Right cardiac atrium (tissue), 5 donors: ENCODE measurements at regions of chr20 and their contacts with region 1.

Region 1: DNA sequence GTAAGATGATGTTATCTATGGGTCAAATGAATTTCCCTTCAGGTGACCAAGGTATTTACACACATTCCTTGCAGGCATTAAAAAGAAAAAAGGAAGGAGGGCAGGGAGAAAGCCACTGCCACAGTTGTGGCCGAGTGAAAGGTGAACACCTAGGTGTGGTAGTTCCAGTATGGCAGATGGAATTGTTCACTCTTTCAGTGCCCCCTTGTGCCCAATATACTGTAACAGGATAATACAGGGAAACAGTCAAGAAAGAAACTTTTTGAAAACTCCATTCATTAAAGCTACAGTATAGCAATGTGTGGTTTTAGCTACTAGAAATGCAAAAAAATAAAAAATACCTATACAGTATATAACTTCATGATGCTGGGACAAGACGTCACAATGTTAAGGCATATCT is 52.1 kb downstream of the BMP2 start:
- DNase-seq: no peak
- ATAC-seq: peak; percentile 40 to 64
- H3K4me3 ChIP-seq: no peak overlapping the region
- H3K27ac ChIP-seq: no peak overlapping the region
- H3K4me1 ChIP-seq: no peaks in the 10 kb centered on the region
- H3K27me3 ChIP-seq: no peaks in the 10 kb centered on the region

Region 2: GRCh38 chr20:6583134-6583738 is 236.4 kb before region 1 on chr20:
- intact Hi-C with region 1: loop called in 2 of 4 experiments (anchors 5 to 10 kb)
- DNase-seq: peak; percentile 52 to 82 (median 63)
- ATAC-seq: peak; percentile 81 to 85
- H3K4me3 ChIP-seq: no peak overlapping the region
- H3K27ac ChIP-seq: no peak overlapping the region
- H3K4me1 ChIP-seq: peaks cover 3% of the 10 kb centered on the region
- H3K27me3 ChIP-seq: no peaks in the 10 kb centered on the region

Region 3: GRCh38 chr20:6914986-6915385 is 95.4 kb after region 1 on chr20:
- intact Hi-C with region 1: no loop called
- DNase-seq: no peak
- ATAC-seq: no peak
- H3K4me3 ChIP-seq: no peak overlapping the region
- H3K27ac ChIP-seq: no peak overlapping the region
- H3K4me1 ChIP-seq: no peaks in the 10 kb centered on the region
- H3K27me3 ChIP-seq: no peaks in the 10 kb centered on the region

Region 4: GRCh38 chr20:7161690-7162089 is 342.1 kb after region 1 on chr20:
- intact Hi-C with region 1: no loop called
- DNase-seq: peak in 1 of 3 donors; percentile 40
- ATAC-seq: no peak
- H3K4me3 ChIP-seq: no peak overlapping the region
- H3K27ac ChIP-seq: no peak overlapping the region
- H3K4me1 ChIP-seq: no peaks in the 10 kb centered on the region
- H3K27me3 ChIP-seq: no peaks in the 10 kb centered on the region